AG04450 (cell line): ENCODE measurements at regions of chr11 and their contacts with region 1.

Region 1: DNA sequence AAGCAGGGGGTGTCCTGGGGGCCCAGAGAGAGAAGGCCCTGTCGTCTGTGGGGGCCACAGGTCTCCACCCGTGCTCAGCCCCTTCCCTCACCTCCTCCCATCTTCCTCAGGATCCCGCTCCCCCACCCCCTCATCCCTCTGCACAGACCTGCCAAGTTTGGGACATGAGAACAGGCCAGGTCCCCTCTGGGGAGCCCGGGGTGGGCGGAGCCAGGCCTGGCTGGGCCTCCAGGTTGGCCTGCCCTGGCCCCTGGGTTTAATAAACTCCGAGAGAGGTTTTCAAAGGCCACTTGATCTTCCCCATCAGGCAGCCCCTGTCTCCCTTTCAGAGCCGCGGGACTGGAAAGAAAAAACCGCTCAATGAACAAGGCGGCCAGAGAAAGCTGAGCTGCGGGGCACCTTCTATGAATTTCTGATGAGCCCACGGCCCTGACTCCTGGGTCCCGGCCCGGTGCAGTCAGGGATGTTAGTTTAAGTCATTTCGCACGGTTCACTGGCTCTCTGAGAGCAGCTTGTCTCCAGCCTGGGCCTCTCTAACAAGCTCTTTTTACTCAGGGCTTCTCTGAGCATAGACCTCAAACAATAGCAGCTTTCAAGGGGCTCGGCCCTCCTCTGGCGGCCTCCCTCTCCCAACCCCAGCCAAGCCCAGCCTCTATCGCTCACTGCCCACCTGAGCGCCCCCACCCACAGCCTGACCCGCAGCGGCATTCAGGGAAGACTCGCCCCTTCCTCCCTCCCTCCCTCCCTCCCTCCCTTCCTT is 64.8 kb downstream of the RPUSD4 start:
- DNase-seq: no peak
- H3K4me3 ChIP-seq: no peak overlapping the region
- H3K27ac ChIP-seq: no peak overlapping the region
- H3K27me3 ChIP-seq: peaks cover 55% of the 10 kb centered on the region
- CTCF ChIP-seq: no peak

Region 2: DNA sequence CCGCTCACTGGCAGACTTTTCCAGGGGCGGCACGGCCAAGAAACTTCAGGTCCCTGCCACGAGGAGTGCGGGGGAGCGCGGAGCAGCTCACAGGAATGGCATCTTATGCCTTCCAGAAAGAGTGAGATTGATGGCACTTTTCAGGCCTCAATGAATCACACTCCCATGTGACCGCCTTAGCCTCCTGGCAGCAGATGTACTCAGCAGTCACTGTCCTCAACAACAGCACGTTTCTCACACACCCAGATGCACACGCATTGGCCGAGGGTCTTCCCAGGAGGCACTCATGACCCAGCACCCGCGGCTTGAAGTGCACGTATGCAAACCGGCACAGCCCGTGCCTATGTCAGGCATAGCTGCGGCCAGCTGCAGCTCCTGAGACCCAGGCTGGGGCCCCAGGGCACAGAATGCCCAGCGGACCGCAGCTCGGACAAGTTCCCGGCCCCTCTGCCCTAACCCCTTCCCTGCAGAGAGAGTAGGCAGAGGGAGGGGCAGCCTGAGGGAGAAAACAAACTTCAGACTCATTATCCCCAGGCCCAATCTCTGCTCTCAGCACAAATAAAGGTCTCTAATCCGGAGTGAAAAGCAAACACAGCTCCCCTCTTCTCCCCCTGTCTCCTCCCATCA is 16.6 kb after region 1 on chr11:
- CTCF ChIA-PET with region 1: interaction called, 13 read pairs
- POLR2A ChIA-PET with region 1: interaction called, 8 read pairs
- DNase-seq: peak; percentile 71
- H3K4me3 ChIP-seq: no peak overlapping the region
- H3K27ac ChIP-seq: peak overlapping the region; percentile 68
- H3K27me3 ChIP-seq: peaks cover 20% of the 10 kb centered on the region
- CTCF ChIP-seq: no peak